Mammary epithelial cell (primary cell): ENCODE measurements at regions of chr15 and their contacts with region 1.

Region 1: GRCh38 chr15:77858792-77859490 is 218.6 kb downstream of the TBC1D2B start:
- DNase-seq: no peak
- H3K4me3 ChIP-seq: no peak overlapping the region
- H3K27ac ChIP-seq: no peak overlapping the region
- H3K4me1 ChIP-seq: no peaks in the 10 kb centered on the region
- H3K27me3 ChIP-seq: no peaks in the 10 kb centered on the region
- CTCF ChIP-seq: no peak

Region 2: DNA sequence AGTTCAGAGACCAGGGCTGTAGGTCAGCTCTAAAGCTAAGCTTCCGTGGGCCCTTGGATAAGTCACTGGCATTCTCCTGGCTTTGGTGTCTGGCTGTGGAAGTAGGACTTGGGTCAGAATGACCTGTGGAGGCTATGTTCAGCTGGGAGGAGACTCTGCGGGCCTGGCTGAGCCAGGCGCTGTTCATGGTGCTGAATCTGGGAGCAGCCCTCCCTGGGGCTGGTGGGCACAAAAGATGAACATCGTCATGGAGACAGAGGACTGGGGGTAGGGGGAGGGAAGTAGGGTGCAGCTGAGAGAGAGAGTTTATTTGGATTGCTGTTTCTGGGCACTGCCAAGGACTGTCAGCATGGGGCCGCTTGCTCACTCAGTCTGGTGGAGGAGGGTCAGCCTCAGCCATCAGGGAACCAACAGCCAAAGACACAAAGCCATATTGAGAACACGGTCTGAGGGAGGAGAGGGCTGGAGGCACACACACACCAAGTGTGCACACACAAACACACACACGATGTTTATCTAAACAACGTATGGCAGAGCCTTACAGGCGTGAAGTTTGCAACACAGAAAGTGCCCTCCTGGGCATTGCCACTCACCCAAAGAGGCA is 105.6 kb before region 1 on chr15:
- CTCF ChIA-PET with region 1: no interaction called
- dilution Hi-C with region 1: loop called (anchors 5 kb)
- in situ Hi-C with region 1: no loop called
- intact Hi-C with region 1: no loop called
- DNase-seq: peak; percentile 6
- H3K4me3 ChIP-seq: no peak overlapping the region
- H3K27ac ChIP-seq: no peak overlapping the region
- H3K4me1 ChIP-seq: no peaks in the 10 kb centered on the region
- H3K27me3 ChIP-seq: no peaks in the 10 kb centered on the region
- CTCF ChIP-seq: no peak

Region 3: GRCh38 chr15:78795670-78796069 is 936.7 kb after region 1 on chr15:
- CTCF ChIA-PET with region 1: no interaction called
- dilution Hi-C with region 1: no loop called
- in situ Hi-C with region 1: no loop called
- intact Hi-C with region 1: no loop called
- DNase-seq: no peak
- H3K4me3 ChIP-seq: no peak overlapping the region
- H3K27ac ChIP-seq: no peak overlapping the region
- H3K4me1 ChIP-seq: peaks cover 15% of the 10 kb centered on the region
- H3K27me3 ChIP-seq: no peaks in the 10 kb centered on the region
- CTCF ChIP-seq: no peak